Ascending aorta (tissue), 2 donors: ENCODE measurements at regions of chr13 and their contacts with region 1.

Region 1: DNA sequence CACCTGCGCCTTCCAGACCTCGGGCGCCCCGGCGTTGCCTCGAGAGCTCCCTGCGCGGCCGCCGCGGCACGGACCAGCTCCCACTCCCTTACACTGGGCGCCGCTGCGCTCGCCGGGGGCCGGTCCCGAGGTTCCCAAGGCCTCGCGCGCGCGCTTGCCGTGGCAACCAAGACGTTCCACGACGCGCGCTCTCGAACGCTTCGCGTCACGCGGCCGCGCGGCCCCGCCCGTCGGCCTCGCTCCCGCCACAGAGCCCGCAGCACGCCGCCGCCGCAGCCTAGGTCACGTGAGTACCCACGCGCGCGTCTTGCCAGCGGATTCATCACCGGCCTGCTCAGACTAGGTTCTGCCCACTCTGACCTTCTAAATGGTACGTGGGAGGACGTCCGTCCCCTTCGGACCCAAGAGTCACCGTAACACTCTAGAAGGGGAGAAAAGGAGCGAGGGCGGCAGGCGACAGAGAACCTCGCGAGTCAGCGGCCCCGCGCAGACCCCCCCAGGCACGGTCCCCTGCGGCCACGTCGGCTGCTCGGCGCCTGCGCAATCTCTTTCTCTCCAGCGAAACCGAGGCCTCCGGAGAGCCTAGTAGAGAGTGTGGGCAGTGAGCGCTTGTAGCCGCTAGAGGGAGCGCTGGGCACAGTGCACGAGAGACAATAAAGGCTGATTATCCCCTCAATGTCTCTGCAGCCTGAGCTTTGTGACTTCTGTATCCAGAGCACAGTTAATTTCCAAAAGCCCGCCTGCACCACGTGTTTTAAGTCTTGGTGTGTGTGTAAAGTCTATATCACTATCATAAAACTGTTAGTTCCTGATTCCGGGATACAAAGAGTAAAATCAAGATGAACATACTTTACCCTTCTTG is at the start of gene SPART:
- DNase-seq: peak; percentile 70 to 96
- H3K4me3 ChIP-seq: peak within 1 kb of the TSS; percentile 77 to 88
- H3K27ac ChIP-seq: peak within 1 kb of the TSS; percentile 99 to 100
- H3K4me1 ChIP-seq: peaks cover 0 to 14% of the 10 kb centered on the region in 2 donors
- H3K27me3 ChIP-seq: no peaks in the 10 kb centered on the region
- CTCF ChIP-seq: peak; percentile 86 to 99 (median 95)
- total RNA-seq, gene SPART: 27.4 TPM

Region 2: DNA sequence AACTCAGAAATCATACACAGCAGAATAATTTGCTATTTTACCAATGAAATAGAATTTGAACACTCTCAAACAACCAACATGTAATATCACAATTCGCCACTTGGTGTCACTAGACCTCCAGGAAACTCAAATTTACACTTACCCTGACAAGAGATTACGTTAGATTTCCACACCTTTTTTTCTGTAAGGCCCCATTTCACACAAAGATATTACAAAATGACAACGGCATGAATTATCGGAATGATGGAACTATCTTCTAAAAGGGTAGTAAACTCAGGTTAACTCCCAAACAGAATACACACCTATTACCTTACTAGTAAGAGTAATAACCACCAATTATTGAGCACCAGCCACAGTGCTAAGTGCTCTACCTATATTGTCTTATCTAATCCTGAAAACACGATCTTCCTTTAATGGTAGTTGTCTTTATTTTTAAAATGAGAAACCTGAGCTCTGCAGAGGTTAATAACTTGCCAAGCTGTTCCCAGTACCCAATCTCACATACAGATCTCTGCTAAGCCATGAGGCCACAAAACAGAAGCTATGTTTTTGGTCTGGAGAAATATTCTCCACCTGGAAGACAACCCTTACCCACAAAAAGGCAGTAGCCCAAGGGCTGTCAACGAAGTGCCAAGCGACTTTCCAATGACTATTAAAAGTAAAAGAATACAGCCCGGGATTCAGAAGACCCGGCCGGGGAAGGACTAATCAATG is 367.7 kb before region 1 on chr13:
- intact Hi-C with region 1: loop called (anchors 2 kb)
- DNase-seq: no peak
- H3K4me3 ChIP-seq: no peak overlapping the region
- H3K27ac ChIP-seq: peak overlapping the region; percentile 69 to 71
- H3K4me1 ChIP-seq: peaks cover 0 to 7% of the 10 kb centered on the region in 2 donors
- H3K27me3 ChIP-seq: no peaks in the 10 kb centered on the region
- CTCF ChIP-seq: peak; percentile 46 to 75 (median 73)

Region 3: GRCh38 chr13:36297366-36298338 is 48.8 kb before region 1 on chr13 and contains the start of gene CCDC169:
- intact Hi-C with region 1: loop called (anchors 5 kb)
- DNase-seq: peak in 1 of 2 donors; percentile 78
- H3K4me3 ChIP-seq: peak within 1 kb of the TSS; percentile 60 to 67
- H3K27ac ChIP-seq: peak within 1 kb of the TSS; percentile 31 to 39
- H3K4me1 ChIP-seq: no peaks in the 10 kb centered on the region
- H3K27me3 ChIP-seq: no peaks in the 10 kb centered on the region
- CTCF ChIP-seq: no peak
- total RNA-seq, gene CCDC169: 4.7 TPM

Region 4: DNA sequence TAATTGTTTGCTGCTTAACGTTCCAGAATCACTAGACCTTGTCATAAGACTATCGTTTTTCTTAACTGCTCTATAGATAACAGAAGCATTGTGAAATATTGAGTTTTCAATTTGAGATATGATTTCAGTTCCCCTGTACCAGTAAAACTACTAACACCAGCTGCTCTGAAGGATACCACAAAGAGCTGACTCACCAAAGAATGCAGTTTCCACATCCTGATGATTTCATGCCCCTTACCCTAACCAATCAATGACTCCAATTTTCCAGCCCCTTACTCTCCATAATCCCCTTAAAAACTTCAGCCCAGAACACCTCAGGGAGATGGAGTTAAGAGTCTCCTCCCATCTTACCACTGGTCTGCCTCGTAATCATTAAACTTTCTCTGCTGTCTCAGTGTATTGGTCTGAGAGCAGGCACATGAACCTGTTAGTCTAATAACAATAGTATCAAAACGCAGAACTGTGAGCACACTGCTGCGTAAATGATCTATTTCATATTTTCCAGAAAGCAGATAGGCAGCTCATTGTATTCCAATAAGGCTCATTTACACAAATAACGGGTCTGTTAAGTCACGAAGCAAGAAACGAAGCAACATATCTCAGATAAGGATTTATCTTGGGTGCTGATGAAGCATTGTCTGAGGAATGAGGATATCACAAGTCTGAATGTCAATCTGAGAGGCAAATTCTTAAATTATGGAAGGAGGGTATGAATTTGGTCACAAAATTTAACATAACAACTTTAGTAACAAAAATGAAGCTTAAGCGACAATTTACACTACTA is 71.8 kb after region 1 on chr13:
- intact Hi-C with region 1: no loop called
- DNase-seq: no peak
- H3K4me3 ChIP-seq: no peak overlapping the region
- H3K27ac ChIP-seq: no peak overlapping the region
- H3K4me1 ChIP-seq: no peaks in the 10 kb centered on the region
- H3K27me3 ChIP-seq: no peaks in the 10 kb centered on the region
- CTCF ChIP-seq: no peak

Region 5: DNA sequence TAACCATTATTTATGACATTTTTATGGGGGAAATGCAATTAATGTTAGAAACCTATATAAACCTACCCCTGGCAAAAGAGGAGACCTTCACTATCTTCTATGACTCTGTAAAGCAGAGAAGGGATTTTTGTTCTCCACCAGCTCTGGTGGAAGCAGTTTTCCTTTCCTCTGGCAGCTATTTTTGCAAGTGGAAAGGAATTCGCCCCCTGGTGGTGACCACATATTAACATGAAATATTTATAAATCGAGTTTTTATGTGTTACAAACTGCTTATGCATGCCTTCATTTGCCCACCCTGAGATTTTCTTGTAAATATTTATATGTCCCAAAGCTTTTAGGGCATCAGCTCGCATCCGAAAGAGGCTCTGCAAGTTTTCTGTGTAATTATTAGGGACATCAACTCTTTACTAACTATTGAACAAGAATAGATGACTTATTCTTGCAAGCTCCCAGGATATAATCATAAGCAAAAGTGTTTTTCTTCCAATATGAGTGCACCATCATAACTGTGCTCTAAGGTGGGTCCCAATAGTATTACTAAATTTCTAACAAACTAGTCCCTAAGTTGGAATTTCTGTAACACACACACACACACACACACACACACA is 389.8 kb after region 1 on chr13:
- intact Hi-C with region 1: loop called (anchors 5 kb)
- DNase-seq: no peak
- H3K4me3 ChIP-seq: no peak overlapping the region
- H3K27ac ChIP-seq: no peak overlapping the region
- H3K4me1 ChIP-seq: no peaks in the 10 kb centered on the region
- H3K27me3 ChIP-seq: no peaks in the 10 kb centered on the region
- CTCF ChIP-seq: peak; percentile 36 to 66 (median 61)

Region 6: GRCh38 chr13:36818804-36819738 is 472.6 kb after region 1 on chr13 and contains the start of gene RFXAP:
- intact Hi-C with region 1: loop called (anchors 2 kb)
- DNase-seq: peak; percentile 45 to 92
- H3K4me3 ChIP-seq: peak within 1 kb of the TSS; percentile 74 to 87
- H3K27ac ChIP-seq: peak within 1 kb of the TSS; percentile 63 to 73
- H3K4me1 ChIP-seq: peaks cover 0 to 4% of the 10 kb centered on the region in 2 donors
- H3K27me3 ChIP-seq: no peaks in the 10 kb centered on the region
- CTCF ChIP-seq: peak in 2 of 3 experiments; percentile 17 to 22
- total RNA-seq, gene RFXAP: 5.9 TPM

Region 7: GRCh38 chr13:36999054-36999714 is 652.7 kb after region 1 on chr13 and contains the start of gene ALG5:
- intact Hi-C with region 1: loop called (anchors 5 kb)
- DNase-seq: peak; percentile 23 to 93
- H3K4me3 ChIP-seq: peak within 1 kb of the TSS; percentile 88 to 98
- H3K27ac ChIP-seq: peak within 1 kb of the TSS; percentile 98 to 100
- H3K4me1 ChIP-seq: peaks cover 3 to 5% of the 10 kb centered on the region in 2 donors
- H3K27me3 ChIP-seq: no peaks in the 10 kb centered on the region
- CTCF ChIP-seq: peak; percentile 74 to 91 (median 87)
- total RNA-seq, gene ALG5: 26.7 TPM